Heart right ventricle (tissue), 16 donors: ENCODE measurements at regions of chr17 and their contacts with region 1.

Region 1: DNA sequence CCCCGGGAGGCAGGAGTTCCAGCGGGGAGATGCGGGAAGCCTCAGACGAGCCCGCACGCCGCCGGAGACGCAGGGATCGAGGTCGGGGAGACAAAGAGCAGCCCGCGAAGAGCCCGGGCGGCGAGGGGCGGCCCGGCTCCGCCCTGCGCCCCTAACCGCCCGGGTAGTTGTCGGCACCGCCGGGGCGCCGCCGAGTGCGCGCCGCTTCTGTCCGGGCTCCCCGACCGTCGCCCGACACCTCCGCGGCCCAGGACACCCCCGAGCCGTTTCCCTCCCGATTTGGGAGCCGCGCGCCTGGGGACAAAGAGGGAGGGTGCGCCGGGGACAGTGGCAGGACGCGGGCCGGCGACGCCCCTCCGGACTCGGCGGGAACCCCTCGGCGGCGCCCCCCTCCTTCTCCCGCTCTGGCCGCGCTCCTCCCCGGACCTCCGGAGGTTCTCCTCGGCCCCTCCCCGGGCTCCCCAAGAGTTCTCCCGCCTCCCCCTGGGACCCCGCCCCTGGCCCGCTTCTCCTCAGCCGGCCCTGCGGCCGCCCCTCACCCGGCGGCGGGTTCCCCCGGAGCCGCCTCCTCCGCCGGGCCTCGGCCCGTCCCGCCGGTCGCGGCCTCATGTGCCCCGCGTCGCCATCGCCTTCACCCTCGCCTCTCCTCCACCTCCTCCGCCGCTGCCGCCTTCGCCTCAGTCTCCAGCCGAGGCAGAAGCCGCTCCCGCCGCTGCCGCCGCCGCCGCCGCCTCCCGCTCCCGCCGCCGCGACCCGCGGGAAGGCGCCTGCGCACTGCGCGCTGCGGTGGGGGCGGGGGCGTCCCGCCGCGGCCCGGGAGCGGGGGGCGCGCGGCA is at the start of gene GJC1:
- DNase-seq: peak; percentile 38 to 62
- ATAC-seq: peak; percentile 48 to 78 (median 72)
- H3K4me3 ChIP-seq: peak within 1 kb of the TSS; percentile 46 to 86 (median 75)
- H3K27ac ChIP-seq: peak within 1 kb of the TSS; percentile 84 to 94 (median 90)
- H3K4me1 ChIP-seq: peaks cover 0 to 31% (median 17%) of the 10 kb centered on the region in 9 donors
- H3K27me3 ChIP-seq: peaks cover 0 to 84% (median 15%) of the 10 kb centered on the region in 7 donors
- CTCF ChIP-seq: no peak
- total RNA-seq, gene GJC1: 13.9 to 41.5 (median 23.8) TPM

Region 2: GRCh38 chr17:44786551-44787081 is 43.1 kb before region 1 on chr17:
- intact Hi-C with region 1: loop called in 5 of 10 experiments (anchors 2 to 5 kb)
- DNase-seq: peak; percentile 67 to 73
- ATAC-seq: peak; percentile 57 to 87 (median 84)
- H3K4me3 ChIP-seq: no peak overlapping the region
- H3K27ac ChIP-seq: peak overlapping the region in 9 of 10 donors; percentile 6 to 88 (median 70)
- H3K4me1 ChIP-seq: peaks cover 12 to 49% (median 35%) of the 10 kb centered on the region in 9 donors
- H3K27me3 ChIP-seq: no peaks in the 10 kb centered on the region
- CTCF ChIP-seq: no peak